GM12878 (cell line): ENCODE measurements at regions of chr1 and their contacts with region 1.

Region 1: DNA sequence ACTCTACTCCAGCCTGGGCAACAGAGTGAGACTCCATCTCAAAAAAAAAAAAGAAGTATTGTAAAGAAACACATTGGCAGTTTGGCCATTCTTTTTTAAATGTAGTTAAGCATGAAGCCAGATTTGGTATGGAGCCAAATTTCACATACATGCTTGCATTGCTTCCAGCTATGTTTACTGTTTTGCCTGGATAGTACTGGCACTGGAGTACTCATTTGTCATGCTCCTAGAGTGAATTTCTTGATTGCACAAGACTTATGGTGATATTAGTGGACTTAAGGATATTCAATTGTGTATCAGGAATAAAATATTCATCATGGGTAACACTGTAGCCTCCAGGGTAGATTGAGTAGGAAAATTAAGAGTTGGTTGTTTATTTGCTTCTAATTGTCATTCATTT is 24.5 kb upstream of the SLC9A1 start:
- DNase-seq: no peak
- ATAC-seq: no peak
- H3K4me3 ChIP-seq: no peak overlapping the region
- H3K27ac ChIP-seq: no peak overlapping the region
- H3K4me1 ChIP-seq: no peaks in the 10 kb centered on the region
- H3K27me3 ChIP-seq: no peaks in the 10 kb centered on the region
- CTCF ChIP-seq: no peak
- EP300 ChIP-seq: no peak
- POLR2A ChIP-seq: no peak
- RAD21 ChIP-seq: no peak

Region 2: DNA sequence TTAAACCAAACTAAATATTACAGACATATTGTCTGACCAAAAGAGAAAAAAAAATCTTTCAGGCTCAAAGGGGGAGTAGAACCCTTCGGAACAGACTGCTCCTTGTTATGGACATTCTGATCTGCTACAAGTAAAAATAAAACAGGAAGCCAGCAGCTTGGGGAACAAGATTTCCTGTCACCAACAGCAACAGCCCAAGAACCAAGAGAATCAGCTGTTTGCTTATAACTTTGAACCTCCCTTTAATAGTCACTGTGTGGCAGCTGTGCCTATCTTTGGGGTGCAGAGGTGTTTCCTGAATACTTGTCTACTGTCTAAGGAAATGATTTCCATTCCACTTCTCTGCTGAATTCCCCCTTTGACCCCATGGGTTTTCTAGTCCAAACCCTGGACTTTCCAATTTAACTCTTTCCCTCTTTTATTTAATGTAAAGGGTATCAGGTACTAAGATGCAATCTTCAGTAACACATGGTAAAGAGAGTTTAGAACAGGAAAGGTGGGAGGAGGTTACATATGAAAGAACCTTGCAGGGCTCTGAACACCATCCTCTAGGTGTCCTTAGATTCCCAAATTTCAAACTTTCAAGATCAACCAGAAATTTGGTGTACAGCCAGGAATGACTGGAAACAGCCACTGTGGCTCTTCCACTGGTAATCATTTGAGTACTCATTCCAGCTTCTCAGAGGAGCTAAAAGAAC is 251.7 kb after region 1 on chr1:
- CTCF ChIA-PET with region 1: no interaction called
- POLR2A ChIA-PET with region 1: interaction called, 10 read pairs
- RAD21 ChIA-PET with region 1: no interaction called
- SMC1A ChIA-PET with region 1: no interaction called
- in situ Hi-C with region 1: no loop called
- intact Hi-C with region 1: no loop called
- DNase-seq: no peak
- ATAC-seq: peak; percentile 63
- H3K4me3 ChIP-seq: peak overlapping the region; percentile 12; the same call in 1 of the 2 replicates
- H3K27ac ChIP-seq: peak overlapping the region; percentile 59
- H3K4me1 ChIP-seq: peaks cover 76% of the 10 kb centered on the region
- H3K27me3 ChIP-seq: no peaks in the 10 kb centered on the region
- CTCF ChIP-seq: 0 out of 6 replicates have a peak, but pooled peaks of 1 of the 3 experiments have one; percentile 1
- EP300 ChIP-seq: no peak
- POLR2A ChIP-seq: no peak
- RAD21 ChIP-seq: 0 out of 2 replicates have a peak, but pooled peaks have one; percentile 7